CD14-positive monocyte (primary cell): ENCODE measurements at regions of chr19 and their contacts with region 1.

Region 1: DNA sequence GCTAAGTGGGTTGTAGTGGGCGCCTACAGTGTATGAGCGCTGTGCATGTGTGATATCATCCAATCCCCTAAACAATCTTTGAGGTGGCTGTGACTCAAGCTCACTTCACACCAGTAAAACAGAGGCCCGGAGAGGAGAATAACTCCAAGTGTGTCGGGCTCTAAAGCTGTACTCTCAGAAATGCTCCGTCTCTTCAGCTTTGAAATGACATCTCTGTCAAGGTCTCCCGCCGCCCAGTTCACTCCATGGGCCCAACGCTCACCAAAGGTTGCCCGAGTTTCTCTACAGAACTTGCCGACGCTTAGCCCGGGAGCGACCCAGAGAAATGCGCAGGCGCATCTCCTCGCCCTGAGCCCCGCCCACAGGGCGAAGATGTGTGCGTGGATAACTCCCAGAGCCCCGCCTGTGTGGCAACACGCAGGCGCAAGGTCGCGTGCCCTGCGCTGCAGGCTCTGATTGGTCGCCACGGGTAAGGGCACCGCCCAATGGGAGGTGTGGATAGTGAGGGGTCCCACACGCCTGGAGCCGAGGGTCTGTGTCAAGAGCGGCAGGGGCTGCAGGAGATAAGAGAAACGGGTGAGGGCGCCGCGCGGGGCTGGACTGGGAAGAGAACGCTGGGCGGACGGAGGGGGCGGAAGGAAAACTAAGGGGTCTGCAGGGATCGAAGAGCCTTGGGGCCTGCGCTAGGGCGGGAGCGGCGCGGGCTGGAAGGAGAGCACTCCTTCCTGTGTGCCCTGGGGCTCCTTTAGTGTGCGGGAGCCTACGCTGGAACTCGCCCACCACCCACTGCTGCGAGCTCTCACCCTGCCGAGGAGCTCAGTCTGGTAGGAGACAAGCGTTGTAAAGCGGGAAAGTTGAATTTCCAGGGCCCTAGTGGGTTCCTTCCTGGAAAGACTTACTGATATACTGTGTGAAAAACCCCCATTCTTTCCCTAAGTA is at the start of gene ZNF526:
- DNase-seq: peak; percentile 96 to 97 (median 96)
- H3K4me3 ChIP-seq: peak within 1 kb of the TSS; percentile 58 to 84 (median 83)
- H3K4me3 Mint-ChIP-seq: peak within 1 kb of the TSS; percentile 99
- H3K27ac ChIP-seq: peak within 1 kb of the TSS; percentile 83 to 98
- H3K27ac Mint-ChIP-seq: peak within 1 kb of the TSS; percentile 98 to 100 (median 99)
- H3K4me1 ChIP-seq: peaks cover 51 to 56% of the 10 kb centered on the region in 2 donors
- H3K4me1 Mint-ChIP-seq: peaks cover 56% of the 10 kb centered on the region
- H3K27me3 ChIP-seq: no peaks in the 10 kb centered on the region
- H3K27me3 Mint-ChIP-seq: peaks cover 0 to under 1% (median 0%) of the 10 kb centered on the region in 3 donors
- CTCF ChIP-seq: no peak
- polyA plus RNA-seq, gene ZNF526: 0.96 to 3.4 (median 1.3) TPM

Region 2: DNA sequence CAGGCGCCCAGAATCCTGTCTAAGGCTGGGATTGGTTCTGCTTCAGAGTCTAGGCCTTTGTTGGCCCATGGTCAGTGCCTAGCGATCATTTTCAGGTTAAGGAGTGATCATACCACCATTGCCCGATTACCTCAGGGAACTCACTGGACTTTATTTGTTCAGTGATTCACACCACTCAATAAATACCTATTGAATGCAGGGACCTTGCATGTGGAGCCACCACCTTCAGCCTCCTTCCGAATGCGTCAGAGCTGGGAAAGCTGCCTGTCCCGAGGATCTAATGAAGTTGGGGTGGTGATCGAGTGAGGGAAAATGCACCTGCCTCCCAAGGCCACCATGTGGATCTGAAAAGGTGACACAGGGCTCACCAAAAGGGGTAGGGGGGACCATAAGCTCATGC is 47.8 kb before region 1 on chr19:
- intact Hi-C with region 1: no loop called
- DNase-seq: no peak
- H3K4me3 ChIP-seq: no peak overlapping the region
- H3K4me3 Mint-ChIP-seq: no peak overlapping the region
- H3K27ac ChIP-seq: no peak overlapping the region
- H3K27ac Mint-ChIP-seq: no peak overlapping the region
- H3K4me1 ChIP-seq: peaks cover 10 to 21% of the 10 kb centered on the region in 2 donors
- H3K4me1 Mint-ChIP-seq: peaks cover 17% of the 10 kb centered on the region
- H3K27me3 ChIP-seq: peaks cover 15 to 23% of the 10 kb centered on the region in 2 donors
- H3K27me3 Mint-ChIP-seq: peaks cover 29 to 33% (median 32%) of the 10 kb centered on the region in 3 donors
- CTCF ChIP-seq: no peak

Region 3: GRCh38 chr19:42184401-42184861 is 35.6 kb before region 1 on chr19:
- intact Hi-C with region 1: loop called in 1 of 2 experiments (anchors 5 kb)
- DNase-seq: peak; percentile 59 to 73 (median 72)
- H3K4me3 ChIP-seq: peak overlapping the region in 1 of 3 experiments; percentile 53
- H3K4me3 Mint-ChIP-seq: peak overlapping the region; percentile 3 to 65
- H3K27ac ChIP-seq: peak overlapping the region in 1 of 2 donors; percentile 62
- H3K27ac Mint-ChIP-seq: peak overlapping the region; percentile 71 to 91 (median 83)
- H3K4me1 ChIP-seq: peaks cover 52 to 61% of the 10 kb centered on the region in 2 donors
- H3K4me1 Mint-ChIP-seq: peaks cover 62% of the 10 kb centered on the region
- H3K27me3 ChIP-seq: peaks cover 11 to 14% of the 10 kb centered on the region in 2 donors
- H3K27me3 Mint-ChIP-seq: peaks cover 5 to 12% (median 9%) of the 10 kb centered on the region in 3 donors
- CTCF ChIP-seq: peak; percentile 96

Region 4: GRCh38 chr19:42199440-42200115 is 20.5 kb before region 1 on chr19:
- intact Hi-C with region 1: loop called (anchors 1 to 2 kb)
- DNase-seq: peak; percentile 82 to 87 (median 86)
- H3K4me3 ChIP-seq: peak overlapping the region; percentile 28 to 79 (median 54)
- H3K4me3 Mint-ChIP-seq: peak overlapping the region; percentile 79 to 86
- H3K27ac ChIP-seq: peak overlapping the region; percentile 100
- H3K27ac Mint-ChIP-seq: peak overlapping the region; percentile 100
- H3K4me1 ChIP-seq: peaks cover 90% of the 10 kb centered on the region in 2 donors
- H3K4me1 Mint-ChIP-seq: peaks cover 87% of the 10 kb centered on the region
- H3K27me3 ChIP-seq: no peaks in the 10 kb centered on the region
- H3K27me3 Mint-ChIP-seq: peaks cover 0 to 5% (median 0%) of the 10 kb centered on the region in 3 donors
- CTCF ChIP-seq: peak; percentile 74

Region 5: GRCh38 chr19:42244347-42245220 is 24.5 kb after region 1 on chr19:
- intact Hi-C with region 1: loop called in 1 of 2 experiments (anchors 1 kb)
- DNase-seq: peak; percentile 90 to 94 (median 90)
- H3K4me3 ChIP-seq: peak overlapping the region; percentile 79 to 96 (median 84)
- H3K4me3 Mint-ChIP-seq: peak overlapping the region; percentile 95 to 99
- H3K27ac ChIP-seq: peak overlapping the region; percentile 61 to 76
- H3K27ac Mint-ChIP-seq: peak overlapping the region; percentile 96 to 98 (median 97)
- H3K4me1 ChIP-seq: peaks cover 37 to 44% of the 10 kb centered on the region in 2 donors
- H3K4me1 Mint-ChIP-seq: peaks cover 48% of the 10 kb centered on the region
- H3K27me3 ChIP-seq: no peaks in the 10 kb centered on the region
- H3K27me3 Mint-ChIP-seq: peaks cover 0 to 4% (median 3%) of the 10 kb centered on the region in 3 donors
- CTCF ChIP-seq: peak; percentile 68

Region 6: GRCh38 chr19:42254989-42255765 is 35.1 kb after region 1 on chr19 and contains the start of gene ERF:
- intact Hi-C with region 1: loop called in 1 of 2 experiments (anchors 5 kb)
- DNase-seq: peak; percentile 80 to 90 (median 89)
- H3K4me3 ChIP-seq: peak within 1 kb of the TSS; percentile 79 to 99 (median 99)
- H3K4me3 Mint-ChIP-seq: peak within 1 kb of the TSS; percentile 84 to 93
- H3K27ac ChIP-seq: peak within 1 kb of the TSS; percentile 85 to 88
- H3K27ac Mint-ChIP-seq: peak within 1 kb of the TSS; percentile 57 to 92 (median 77)
- H3K4me1 ChIP-seq: peaks cover 40 to 47% of the 10 kb centered on the region in 2 donors
- H3K4me1 Mint-ChIP-seq: peaks cover 39% of the 10 kb centered on the region
- H3K27me3 ChIP-seq: peaks cover 3 to 14% of the 10 kb centered on the region in 2 donors
- H3K27me3 Mint-ChIP-seq: peaks cover 15 to 33% (median 24%) of the 10 kb centered on the region in 3 donors
- CTCF ChIP-seq: no peak
- polyA plus RNA-seq, gene ERF: 2.3 to 42.6 (median 3.4) TPM

Region 7: DNA sequence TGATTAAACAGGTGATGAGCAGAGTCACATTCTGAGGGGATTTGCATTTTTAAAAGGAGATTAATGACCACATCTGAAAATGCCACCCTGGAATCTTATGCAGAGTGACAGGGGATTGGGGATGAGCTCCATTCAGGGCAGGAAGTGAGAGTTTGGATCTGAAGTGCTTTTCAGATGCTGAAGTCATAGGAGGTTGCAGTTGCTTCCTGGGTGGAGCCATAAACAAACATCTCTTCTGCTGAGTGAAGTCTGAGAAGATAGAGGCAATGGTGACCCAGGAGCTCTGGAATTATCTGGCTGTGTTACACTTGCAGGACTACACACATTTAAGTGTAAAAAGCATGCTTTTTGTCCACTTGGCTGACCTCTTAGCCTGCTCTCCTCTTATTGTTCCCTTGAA is 596.8 kb after region 1 on chr19:
- intact Hi-C with region 1: no loop called
- DNase-seq: no peak
- H3K4me3 ChIP-seq: no peak overlapping the region
- H3K4me3 Mint-ChIP-seq: no peak overlapping the region
- H3K27ac ChIP-seq: no peak overlapping the region
- H3K27ac Mint-ChIP-seq: no peak overlapping the region
- H3K4me1 ChIP-seq: no peaks in the 10 kb centered on the region
- H3K4me1 Mint-ChIP-seq: no peaks in the 10 kb centered on the region
- H3K27me3 ChIP-seq: no peaks in the 10 kb centered on the region
- H3K27me3 Mint-ChIP-seq: peaks cover 2 to 5% (median 5%) of the 10 kb centered on the region in 3 donors
- CTCF ChIP-seq: no peak